HepG2 (cell line): ENCODE measurements at regions of chr12 and their contacts with region 1.

Region 1: DNA sequence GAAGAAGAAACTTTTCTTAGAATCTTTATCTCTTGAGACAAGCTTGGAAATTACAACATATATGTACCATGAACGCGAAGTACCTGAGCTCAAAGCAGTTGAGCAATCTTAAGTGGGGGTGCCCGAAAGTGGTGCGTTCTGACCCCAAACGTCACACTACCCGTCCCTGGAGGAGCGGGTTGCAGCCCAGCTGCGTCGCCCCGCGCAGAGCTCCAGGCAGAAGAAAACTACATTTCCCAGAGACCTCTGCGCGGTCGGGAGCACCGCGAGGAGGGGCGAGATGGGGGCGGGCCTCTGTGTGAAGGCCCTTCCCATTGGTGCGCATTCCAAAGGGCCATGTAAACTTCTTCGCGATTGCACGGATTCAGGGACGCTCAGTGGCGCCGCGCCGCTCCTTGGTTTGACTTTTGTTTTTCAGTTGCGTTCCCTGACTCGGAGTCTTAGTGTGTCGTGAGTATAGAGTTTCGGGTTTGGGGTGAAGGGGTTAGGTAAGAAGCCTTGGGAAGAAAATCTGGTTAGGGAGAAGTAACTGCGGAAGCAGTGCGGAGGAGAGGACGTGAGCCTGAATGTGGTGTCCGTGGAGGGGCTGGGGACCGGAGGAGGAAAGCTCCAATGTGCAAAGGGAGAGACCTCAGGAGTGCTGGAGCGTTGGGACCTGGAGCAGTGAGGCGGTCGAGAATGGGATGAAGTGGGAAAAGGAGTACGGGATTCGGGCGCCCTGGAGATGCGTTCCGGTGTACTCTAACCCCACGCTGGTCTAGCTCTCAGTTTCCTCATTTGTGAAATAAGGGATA is at the start of gene CCDC77:
- DNase-seq: peak; percentile 89
- ATAC-seq: peak; percentile 98
- H3K4me3 ChIP-seq: peak within 1 kb of the TSS; percentile 73 to 92 (median 77)
- H3K27ac ChIP-seq: peak within 1 kb of the TSS; percentile 58
- H3K4me1 ChIP-seq: peaks cover 31% of the 10 kb centered on the region
- H3K27me3 ChIP-seq: no peaks in the 10 kb centered on the region; a peak in 1 of 5 replicates
- CTCF ChIP-seq: peak; percentile 59
- EP300 ChIP-seq: no peak
- POLR2A ChIP-seq: peak; percentile 39 to 70; a peak in 3 of 4 replicates
- RAD21 ChIP-seq: no peak
- total RNA-seq, gene CCDC77: 16.4 and 21.3 TPM in 2 replicates

Region 2: GRCh38 chr12:232731-233614 is 168.5 kb before region 1 on chr12:
- CTCF ChIA-PET with region 1: no interaction called
- POLR2A ChIA-PET with region 1: no interaction called
- in situ Hi-C with region 1: no loop called
- intact Hi-C with region 1: no loop called
- DNase-seq: no peak
- ATAC-seq: no peak
- H3K4me3 ChIP-seq: no peak overlapping the region
- H3K27ac ChIP-seq: no peak overlapping the region
- H3K4me1 ChIP-seq: peaks cover 52% of the 10 kb centered on the region
- H3K27me3 ChIP-seq: peaks cover 1 to 6% of the 10 kb centered on the region in 2 experiments; a peak in 3 of 5 replicates
- CTCF ChIP-seq: no peak
- EP300 ChIP-seq: no peak
- POLR2A ChIP-seq: no peak
- RAD21 ChIP-seq: no peak

Region 3: DNA sequence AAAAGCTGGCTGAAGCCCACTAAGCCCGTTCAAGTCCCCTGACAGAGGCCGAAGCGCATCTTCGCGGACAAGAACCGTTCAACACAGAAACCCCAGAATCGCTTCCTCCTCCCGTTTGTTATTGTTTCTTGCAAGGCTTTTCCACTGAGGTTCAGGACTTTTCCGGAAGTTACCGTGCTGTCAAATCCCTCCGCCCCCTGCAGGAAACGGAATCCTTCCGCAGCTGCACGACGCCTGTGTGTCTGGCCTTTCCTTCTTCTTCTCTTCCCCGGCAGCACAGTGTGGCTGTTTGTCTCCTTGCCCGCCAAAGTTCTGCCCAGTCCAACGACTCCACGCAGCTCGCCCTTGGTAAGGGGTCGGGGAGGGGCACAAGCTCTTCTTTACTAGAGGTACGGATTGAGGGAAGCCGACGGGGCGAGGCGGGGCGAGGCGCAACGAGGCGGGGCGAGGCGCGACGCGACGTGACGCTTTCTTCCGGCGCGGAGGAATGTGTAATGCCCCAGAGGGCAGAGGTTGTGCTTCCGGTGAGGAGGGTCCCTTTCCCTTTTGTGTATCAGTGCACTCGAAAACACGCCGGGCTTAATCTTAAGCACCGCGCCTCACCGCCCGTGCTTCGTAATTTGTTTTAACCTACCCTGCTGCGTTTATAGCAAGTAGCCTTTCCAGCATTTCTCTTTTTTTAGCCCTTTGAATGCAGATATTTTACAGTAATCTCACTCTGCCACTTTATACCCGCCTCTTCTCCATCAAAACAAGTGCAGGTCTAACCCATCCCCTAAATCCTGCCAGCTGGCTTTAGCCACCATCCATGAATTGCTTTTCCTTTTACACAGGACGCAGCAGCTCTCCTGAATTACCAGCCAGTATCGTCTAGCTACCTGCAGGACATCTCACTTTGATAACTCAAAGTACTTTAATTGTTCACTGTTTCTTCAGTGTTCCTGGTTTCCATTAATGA is 12.0 kb before region 1 on chr12 and contains the start of gene KDM5A:
- CTCF ChIA-PET with region 1: no interaction called
- POLR2A ChIA-PET with region 1: interaction called, 43 read pairs
- in situ Hi-C with region 1: no loop called
- intact Hi-C with region 1: loop called (anchors 1 kb)
- DNase-seq: peak; percentile 86
- ATAC-seq: peak; percentile 96
- H3K4me3 ChIP-seq: peak within 1 kb of the TSS; percentile 76 to 99 (median 92)
- H3K27ac ChIP-seq: peak within 1 kb of the TSS; percentile 92
- H3K4me1 ChIP-seq: peaks cover 22% of the 10 kb centered on the region
- H3K27me3 ChIP-seq: no peaks in the 10 kb centered on the region; a peak in 1 of 5 replicates
- CTCF ChIP-seq: no peak; the same call in 1 of the 2 replicates
- EP300 ChIP-seq: 0 out of 4 replicates have a peak, but pooled peaks have one; percentile 2 to 18
- POLR2A ChIP-seq: peak; percentile 76 to 85; a peak in 3 of 4 replicates
- RAD21 ChIP-seq: no peak
- total RNA-seq, gene KDM5A: 29.2 and 40.5 TPM in 2 replicates